T-cell (primary cell): ENCODE measurements at regions of chr18 and their contacts with region 1.

Region 1: GRCh38 chr18:32494111-32494510 is 23.4 kb upstream of the GAREM1 start:
- DNase-seq: no peak
- ATAC-seq: no peak
- H3K4me3 ChIP-seq: no peak overlapping the region
- H3K4me3 Mint-ChIP-seq: no peak overlapping the region
- H3K27ac ChIP-seq: no peak overlapping the region
- H3K27ac Mint-ChIP-seq: no peak overlapping the region
- H3K4me1 ChIP-seq: no peaks in the 10 kb centered on the region
- H3K4me1 Mint-ChIP-seq: no peaks in the 10 kb centered on the region
- H3K27me3 ChIP-seq: no peaks in the 10 kb centered on the region
- H3K27me3 Mint-ChIP-seq: peaks cover 7 to 10% of the 10 kb centered on the region in 2 donors

Region 2: DNA sequence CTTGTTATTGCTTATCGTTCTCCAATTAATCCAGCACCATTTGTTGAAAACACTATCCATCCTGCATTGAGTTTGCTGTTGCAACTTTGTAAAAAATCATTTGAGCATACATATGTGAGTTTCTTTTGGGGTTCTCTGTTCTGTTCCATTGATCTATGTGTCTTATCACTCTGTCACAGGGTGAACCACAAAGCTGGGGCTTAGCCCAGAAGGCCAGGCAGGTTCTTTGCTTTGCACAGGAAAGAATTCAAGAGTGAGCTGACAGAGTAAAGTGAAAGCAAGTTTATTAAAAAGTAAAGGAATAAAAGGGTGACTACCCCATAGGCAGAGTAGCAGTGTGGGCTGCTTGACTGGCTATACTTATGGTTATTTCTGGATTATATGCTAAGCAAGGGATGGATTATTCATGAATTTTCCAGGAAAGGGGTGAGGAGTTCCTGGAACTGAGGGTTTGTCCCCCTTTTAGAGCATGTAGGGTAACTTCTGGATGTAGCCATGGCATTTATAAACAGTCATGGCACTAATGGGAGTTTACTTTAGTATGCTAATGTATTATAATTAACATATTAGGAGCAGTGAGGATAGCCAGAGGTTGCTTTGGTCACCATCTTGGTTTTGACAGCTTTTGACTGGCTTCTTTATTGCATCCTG is 355.7 kb before region 1 on chr18:
- CTCF ChIA-PET with region 1: no interaction called
- POLR2A ChIA-PET with region 1: interaction called in 1 of 2 experiments, 13 read pairs
- DNase-seq: peak in 4 of 35 experiments; percentile 7 to 16 (median 11)
- ATAC-seq: peak in 3 of 4 experiments; percentile 38 to 47 (median 42)
- H3K4me3 ChIP-seq: no peak overlapping the region
- H3K4me3 Mint-ChIP-seq: no peak overlapping the region
- H3K27ac ChIP-seq: no peak overlapping the region
- H3K27ac Mint-ChIP-seq: peak overlapping the region; percentile 15 to 85
- H3K4me1 ChIP-seq: peaks cover 0 to 5% of the 10 kb centered on the region in 2 experiments
- H3K4me1 Mint-ChIP-seq: peaks cover 7 to 8% (median 7%) of the 10 kb centered on the region in 3 donors
- H3K27me3 ChIP-seq: no peaks in the 10 kb centered on the region
- H3K27me3 Mint-ChIP-seq: no peaks in the 10 kb centered on the region

Region 3: GRCh38 chr18:32480581-32480980 is 13.5 kb before region 1 on chr18:
- CTCF ChIA-PET with region 1: no interaction called
- POLR2A ChIA-PET with region 1: no interaction called
- DNase-seq: no peak
- ATAC-seq: no peak
- H3K4me3 ChIP-seq: no peak overlapping the region
- H3K4me3 Mint-ChIP-seq: no peak overlapping the region
- H3K27ac ChIP-seq: no peak overlapping the region
- H3K27ac Mint-ChIP-seq: no peak overlapping the region
- H3K4me1 ChIP-seq: no peaks in the 10 kb centered on the region
- H3K4me1 Mint-ChIP-seq: no peaks in the 10 kb centered on the region
- H3K27me3 ChIP-seq: peaks cover 2 to 3% of the 10 kb centered on the region in 2 experiments
- H3K27me3 Mint-ChIP-seq: peaks cover 14 to 25% of the 10 kb centered on the region in 2 donors